ENCODE measurements at regions of chr22 and their contacts with region 1.

Region 1: GRCh38 chr22:50276143-50276542 is 6.0 kb upstream of the MAPK11 start:
- DNase-seq: peak; percentile 66
- ATAC-seq: peak; percentile 87
- H3K4me3 ChIP-seq: no peak overlapping the region
- H3K27ac ChIP-seq: no peak overlapping the region
- H3K4me1 ChIP-seq: peaks cover 3% of the 10 kb centered on the region
- H3K27me3 ChIP-seq: no peaks in the 10 kb centered on the region
- CTCF ChIP-seq: peak; percentile 62 to 77 (median 73)
- EP300 ChIP-seq: no peak
- POLR2A ChIP-seq: no peak
- RAD21 ChIP-seq: peak; percentile 36; the same call in 1 of the 2 replicates

Region 2: GRCh38 chr22:50074551-50075530 is 201.3 kb before region 1 on chr22:
- CTCF ChIA-PET with region 1: no interaction called
- POLR2A ChIA-PET with region 1: no interaction called
- RAD21 ChIA-PET with region 1: no interaction called
- SMC1A ChIA-PET with region 1: no interaction called
- in situ Hi-C with region 1: no loop called
- intact Hi-C with region 1: no loop called
- DNase-seq: no peak
- ATAC-seq: no peak
- H3K4me3 ChIP-seq: no peak overlapping the region
- H3K27ac ChIP-seq: no peak overlapping the region
- H3K4me1 ChIP-seq: no peaks in the 10 kb centered on the region
- H3K27me3 ChIP-seq: no peaks in the 10 kb centered on the region; a peak in 2 of 4 replicates
- CTCF ChIP-seq: no peak
- EP300 ChIP-seq: no peak
- POLR2A ChIP-seq: no peak
- RAD21 ChIP-seq: no peak

Region 3: GRCh38 chr22:50293441-50294318 is 17.5 kb after region 1 on chr22:
- CTCF ChIA-PET with region 1: interaction called, 12 read pairs
- POLR2A ChIA-PET with region 1: interaction called, 3 read pairs
- RAD21 ChIA-PET with region 1: interaction called, 5 read pairs
- SMC1A ChIA-PET with region 1: interaction called, 4 read pairs
- in situ Hi-C with region 1: no loop called
- intact Hi-C with region 1: no loop called
- DNase-seq: no peak
- ATAC-seq: peak; percentile 33
- H3K4me3 ChIP-seq: peak overlapping the region; percentile 19; the same call in 1 of the 2 replicates
- H3K27ac ChIP-seq: peak overlapping the region; percentile 70; the same call in 1 of the 2 replicates
- H3K4me1 ChIP-seq: peaks cover 27% of the 10 kb centered on the region
- H3K27me3 ChIP-seq: no peaks in the 10 kb centered on the region
- CTCF ChIP-seq: no peak
- EP300 ChIP-seq: no peak
- POLR2A ChIP-seq: peak; percentile 32; the same call in 1 of the 2 replicates
- RAD21 ChIP-seq: no peak

Region 4: GRCh38 chr22:50326959-50327710 is 51.0 kb after region 1 on chr22 and contains the start of gene DENND6B:
- CTCF ChIA-PET with region 1: interaction called, 36 read pairs
- POLR2A ChIA-PET with region 1: interaction called, 3 read pairs
- RAD21 ChIA-PET with region 1: interaction called, 6 read pairs
- SMC1A ChIA-PET with region 1: interaction called, 6 read pairs
- in situ Hi-C with region 1: loop called (anchors 5 kb)
- intact Hi-C with region 1: loop called (anchors 1 kb)
- DNase-seq: no peak
- ATAC-seq: peak; percentile 97
- H3K4me3 ChIP-seq: peak within 1 kb of the TSS; percentile 69
- H3K27ac ChIP-seq: peak within 1 kb of the TSS; percentile 85
- H3K4me1 ChIP-seq: peaks cover 2% of the 10 kb centered on the region; the same call in 1 of the 2 replicates
- H3K27me3 ChIP-seq: no peaks in the 10 kb centered on the region
- CTCF ChIP-seq: peak in 2 of 3 experiments; percentile 29 to 83; a peak in 2 of 6 replicates
- EP300 ChIP-seq: no peak
- POLR2A ChIP-seq: peak; percentile 84
- RAD21 ChIP-seq: peak; percentile 74
- polyA plus RNA-seq, gene DENND6B: 0.72 to 2.3 TPM